ENCODE measurements at regions of chr1 and their contacts with region 1.

Region 1: DNA sequence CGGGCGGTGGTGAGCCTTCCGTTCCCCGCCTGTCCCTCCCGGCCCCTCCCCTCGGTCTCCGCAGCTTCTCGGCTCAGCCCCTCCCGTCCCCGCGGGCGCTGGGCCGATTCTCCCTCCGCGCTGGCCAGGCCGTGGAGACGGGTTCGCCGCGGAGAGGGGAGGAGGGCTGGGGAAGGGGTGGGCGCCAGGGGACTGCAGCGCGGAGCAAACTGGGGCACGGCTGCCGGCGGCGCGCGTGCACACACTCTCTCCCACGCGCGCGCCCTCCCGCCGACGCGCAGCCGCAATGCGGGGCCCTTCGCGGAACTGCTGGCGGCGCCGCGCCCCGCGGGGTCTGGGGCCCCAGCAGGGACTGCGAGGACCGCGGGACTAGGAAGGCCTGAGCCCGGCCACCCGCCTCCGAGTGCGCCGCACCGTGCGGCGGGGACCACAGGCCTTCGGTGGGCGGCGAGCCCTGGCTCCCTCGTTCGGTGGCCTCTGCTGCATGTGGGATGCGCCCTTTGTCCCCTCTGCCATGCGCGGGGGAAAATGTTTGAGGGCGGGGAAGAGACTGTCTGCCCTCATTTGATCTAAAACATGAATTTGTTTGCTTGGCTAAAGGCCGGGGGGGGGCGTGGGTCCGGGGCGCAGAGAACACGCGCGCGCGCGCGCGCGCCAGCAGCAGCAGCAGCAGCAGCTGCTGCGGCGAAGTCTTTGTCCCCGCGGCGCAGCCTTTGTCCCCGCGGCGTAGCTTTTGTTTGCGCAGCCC is 90.7 kb upstream of the VAMP3 start:
- DNase-seq: peak in 13 of 14 experiments; percentile 14 to 74 (median 47)
- ATAC-seq: peak; percentile 79
- H3K4me3 ChIP-seq: peak overlapping the region; percentile 49
- H3K4me3 Mint-ChIP-seq: peak overlapping the region; percentile 84
- H3K27ac ChIP-seq: no peak overlapping the region
- H3K27ac Mint-ChIP-seq: no peak overlapping the region
- H3K4me1 ChIP-seq: peaks cover 15% of the 10 kb centered on the region
- H3K4me1 Mint-ChIP-seq: no peaks in the 10 kb centered on the region
- H3K27me3 ChIP-seq: peaks cover 0 to 6% of the 10 kb centered on the region in 2 experiments
- H3K27me3 Mint-ChIP-seq: no peaks in the 10 kb centered on the region
- CTCF ChIP-seq: no peak

Region 2: GRCh38 chr1:7704214-7705047 is 24.1 kb after region 1 on chr1:
- CTCF ChIA-PET with region 1: no interaction called
- POLR2A ChIA-PET with region 1: interaction called, 22 read pairs
- intact Hi-C with region 1: no loop called
- DNase-seq: peak; percentile 81 to 95 (median 89)
- ATAC-seq: peak; percentile 91
- H3K4me3 ChIP-seq: peak overlapping the region; percentile 54
- H3K4me3 Mint-ChIP-seq: peak overlapping the region; percentile 88
- H3K27ac ChIP-seq: no peak overlapping the region
- H3K27ac Mint-ChIP-seq: peak overlapping the region; percentile 75
- H3K4me1 ChIP-seq: peaks cover 20% of the 10 kb centered on the region
- H3K4me1 Mint-ChIP-seq: peaks cover 27% of the 10 kb centered on the region
- H3K27me3 ChIP-seq: peaks cover 24 to 51% of the 10 kb centered on the region in 2 experiments
- H3K27me3 Mint-ChIP-seq: peaks cover 63% of the 10 kb centered on the region
- CTCF ChIP-seq: no peak

Region 3: GRCh38 chr1:8182034-8182761 is 501.8 kb after region 1 on chr1:
- CTCF ChIA-PET with region 1: no interaction called
- POLR2A ChIA-PET with region 1: no interaction called
- intact Hi-C with region 1: no loop called
- DNase-seq: peak in 7 of 14 experiments; percentile 11 to 83 (median 27)
- ATAC-seq: peak; percentile 89
- H3K4me3 ChIP-seq: peak overlapping the region; percentile 24
- H3K4me3 Mint-ChIP-seq: peak overlapping the region; percentile 1
- H3K27ac ChIP-seq: peak overlapping the region in 1 of 2 donors; percentile 25
- H3K27ac Mint-ChIP-seq: peak overlapping the region; percentile 70
- H3K4me1 ChIP-seq: peaks cover 23% of the 10 kb centered on the region
- H3K4me1 Mint-ChIP-seq: peaks cover 19% of the 10 kb centered on the region
- H3K27me3 ChIP-seq: no peaks in the 10 kb centered on the region
- H3K27me3 Mint-ChIP-seq: no peaks in the 10 kb centered on the region
- CTCF ChIP-seq: no peak